ENCODE measurements at regions of chr4 and their contacts with region 1.

Region 1: GRCh38 chr4:147605499-147605898 is 11.7 kb upstream of the TMEM184C start:
- DNase-seq: no peak

Region 2: DNA sequence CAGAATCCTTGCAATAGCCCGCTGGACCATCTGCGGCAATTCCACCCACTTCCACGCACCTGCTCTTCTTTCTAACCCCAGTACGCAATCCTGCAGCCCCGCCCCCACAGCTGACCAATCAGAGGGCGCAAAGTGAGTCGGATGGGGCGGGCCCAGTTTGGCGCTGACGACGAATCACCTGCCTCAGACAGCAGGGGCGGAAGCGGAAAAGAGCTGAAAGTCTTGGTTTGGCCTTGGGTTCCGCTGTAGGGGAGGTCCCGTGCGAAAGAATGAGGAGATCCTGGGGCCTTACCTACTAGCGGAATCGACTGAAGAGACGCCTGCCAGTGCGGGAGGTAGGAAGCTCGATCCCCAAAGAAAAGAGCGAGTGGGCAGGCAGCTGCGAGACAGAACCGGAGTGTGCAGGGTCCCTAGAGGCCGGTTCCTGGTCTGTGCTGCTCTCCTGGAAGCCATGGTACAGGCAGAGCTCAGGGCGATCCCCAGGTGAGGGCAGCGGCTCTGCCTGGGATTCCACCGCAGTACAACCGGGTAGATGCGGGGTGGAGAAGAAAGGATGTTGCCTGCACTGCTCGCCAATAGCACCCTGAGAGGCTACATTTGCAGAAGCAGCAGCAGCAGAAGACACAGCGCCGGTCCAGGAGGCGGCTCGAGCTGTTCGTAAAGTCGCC is 11.8 kb after region 1 on chr4 and contains the start of gene TMEM184C:
- CTCF ChIA-PET with region 1: interaction called, 3 read pairs
- POLR2A ChIA-PET with region 1: interaction called, 15 read pairs
- DNase-seq: peak; percentile 94

Measured in HEK293T (cell line).